Ascending aorta (tissue), 2 donors: ENCODE measurements at regions of chr14 and their contacts with region 1.

Region 1: GRCh38 chr14:61025251-61026223 is 44.5 kb downstream of the SLC38A6 start:
- DNase-seq: peak in 1 of 2 donors; percentile 71
- H3K4me3 ChIP-seq: peak overlapping the region in 1 of 2 donors; percentile 1
- H3K27ac ChIP-seq: no peak overlapping the region
- H3K4me1 ChIP-seq: no peaks in the 10 kb centered on the region
- H3K27me3 ChIP-seq: no peaks in the 10 kb centered on the region
- CTCF ChIP-seq: peak; percentile 72 to 87 (median 85)

Region 2: GRCh38 chr14:60622917-60623257 is 402.6 kb before region 1 on chr14:
- intact Hi-C with region 1: loop called (anchors 1 kb)
- DNase-seq: no peak
- H3K4me3 ChIP-seq: no peak overlapping the region
- H3K27ac ChIP-seq: no peak overlapping the region
- H3K4me1 ChIP-seq: no peaks in the 10 kb centered on the region
- H3K27me3 ChIP-seq: no peaks in the 10 kb centered on the region
- CTCF ChIP-seq: no peak

Region 3: GRCh38 chr14:60760653-60761364 is 264.7 kb before region 1 on chr14:
- intact Hi-C with region 1: no loop called
- DNase-seq: no peak
- H3K4me3 ChIP-seq: no peak overlapping the region
- H3K27ac ChIP-seq: no peak overlapping the region
- H3K4me1 ChIP-seq: peaks cover 3 to 4% of the 10 kb centered on the region in 2 donors
- H3K27me3 ChIP-seq: no peaks in the 10 kb centered on the region
- CTCF ChIP-seq: no peak

Region 4: GRCh38 chr14:60945984-60946383 is 79.6 kb before region 1 on chr14:
- intact Hi-C with region 1: no loop called
- DNase-seq: no peak
- H3K4me3 ChIP-seq: no peak overlapping the region
- H3K27ac ChIP-seq: no peak overlapping the region
- H3K4me1 ChIP-seq: peaks cover 0 to 5% of the 10 kb centered on the region in 2 donors
- H3K27me3 ChIP-seq: no peaks in the 10 kb centered on the region
- CTCF ChIP-seq: no peak

Region 5: DNA sequence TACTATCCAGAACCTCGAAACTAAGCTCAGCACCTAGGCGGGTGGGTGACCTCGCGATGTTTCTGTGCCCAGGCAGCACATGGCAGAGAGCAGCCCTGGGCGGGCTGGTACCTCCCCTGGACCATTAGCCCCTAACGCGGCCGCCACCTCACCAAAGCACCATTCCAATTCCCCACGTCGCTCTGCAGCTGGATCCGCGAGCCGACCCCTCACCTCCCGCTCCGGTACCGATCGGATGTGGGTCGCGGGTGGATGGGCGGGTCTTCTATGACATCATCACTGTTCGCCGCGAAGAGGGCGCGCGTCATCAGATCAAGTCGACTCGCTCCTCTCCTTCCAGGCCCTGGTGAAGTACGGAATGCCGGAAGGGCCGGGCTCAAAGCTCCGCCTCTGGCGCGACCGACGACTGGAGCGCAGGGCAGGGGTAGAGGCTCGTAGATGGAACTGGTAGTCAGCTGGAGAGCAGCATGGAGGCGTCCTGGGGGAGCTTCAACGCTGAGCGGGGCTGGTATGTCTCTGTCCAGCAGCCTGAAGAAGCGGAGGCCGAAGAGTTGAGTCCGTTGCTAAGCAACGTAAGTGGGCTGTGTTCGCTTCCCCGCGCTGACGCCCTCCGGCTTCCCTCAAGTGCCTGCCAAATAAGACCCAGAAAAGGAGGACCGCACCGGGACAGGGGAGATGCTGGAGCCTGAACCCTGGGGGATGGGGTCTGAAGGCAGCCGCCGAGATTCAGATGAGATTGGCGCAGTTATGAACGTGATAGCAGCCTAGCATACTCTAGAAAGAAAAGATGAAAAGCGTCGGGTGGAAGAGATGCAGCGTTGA is 44.5 kb before region 1 on chr14 and contains the starts of genes SLC38A6 and TRMT5:
- intact Hi-C with region 1: no loop called
- DNase-seq: peak; percentile 75 to 98
- H3K4me3 ChIP-seq: peak within 1 kb of the TSS; percentile 67 to 84
- H3K27ac ChIP-seq: peak within 1 kb of the TSS; percentile 85 to 87
- H3K4me1 ChIP-seq: peaks cover 0 to 11% of the 10 kb centered on the region in 2 donors
- H3K27me3 ChIP-seq: no peaks in the 10 kb centered on the region
- CTCF ChIP-seq: no peak
- total RNA-seq, gene SLC38A6: 1.8 TPM
- total RNA-seq, gene TRMT5: 3.5 TPM

Region 6: DNA sequence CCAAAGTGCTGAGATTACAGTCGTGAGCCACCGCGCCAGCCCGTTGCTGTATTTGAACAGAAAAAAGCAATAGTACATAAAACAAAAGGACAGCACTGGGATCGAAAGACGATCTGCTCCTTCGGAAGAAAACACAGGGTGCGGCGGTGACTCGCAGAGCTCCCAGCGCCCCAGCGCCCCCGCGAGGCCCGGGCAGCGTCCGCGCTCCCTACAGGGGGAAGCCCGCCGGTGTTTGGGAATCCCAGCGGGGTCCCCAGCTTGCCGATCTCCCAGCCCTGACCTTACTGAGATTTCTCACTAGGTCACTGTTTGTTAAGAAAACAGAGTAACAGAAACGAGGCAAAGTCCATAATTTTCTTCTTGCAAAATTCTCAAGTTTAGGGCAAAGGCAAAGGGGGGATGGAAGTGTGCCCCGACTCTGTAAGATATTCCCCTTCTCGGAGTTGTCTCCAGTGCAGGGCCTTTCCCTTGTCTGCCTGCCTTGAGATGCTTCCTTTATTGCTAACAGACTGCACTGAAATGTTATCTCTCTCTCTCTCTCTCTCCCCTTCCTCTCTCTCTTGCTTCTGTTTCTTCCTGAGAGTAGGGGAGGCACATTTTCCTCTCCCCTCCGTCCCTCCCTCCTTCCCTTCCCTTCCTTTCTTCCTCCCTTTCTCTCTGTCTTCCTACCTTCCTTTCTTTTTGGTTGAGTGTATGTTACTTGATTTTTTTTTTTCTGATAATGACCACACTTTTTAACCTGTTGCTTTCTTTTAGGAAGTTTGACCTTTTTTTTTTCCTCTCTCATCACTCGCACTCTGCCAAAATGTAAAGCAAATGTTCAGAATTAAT is 163.7 kb after region 1 on chr14:
- intact Hi-C with region 1: loop called (anchors 5 kb)
- DNase-seq: peak in 1 of 2 donors; percentile 79
- H3K4me3 ChIP-seq: peak overlapping the region; percentile 46 to 54
- H3K27ac ChIP-seq: peak overlapping the region; percentile 63 to 65
- H3K4me1 ChIP-seq: peaks cover 8 to 16% of the 10 kb centered on the region in 2 donors
- H3K27me3 ChIP-seq: no peaks in the 10 kb centered on the region
- CTCF ChIP-seq: peak; percentile 55 to 83 (median 59)

Region 7: GRCh38 chr14:61234215-61234916 is 208.8 kb after region 1 on chr14:
- intact Hi-C with region 1: no loop called
- DNase-seq: no peak
- H3K4me3 ChIP-seq: no peak overlapping the region
- H3K27ac ChIP-seq: no peak overlapping the region
- H3K4me1 ChIP-seq: no peaks in the 10 kb centered on the region
- H3K27me3 ChIP-seq: no peaks in the 10 kb centered on the region
- CTCF ChIP-seq: no peak

Region 8: DNA sequence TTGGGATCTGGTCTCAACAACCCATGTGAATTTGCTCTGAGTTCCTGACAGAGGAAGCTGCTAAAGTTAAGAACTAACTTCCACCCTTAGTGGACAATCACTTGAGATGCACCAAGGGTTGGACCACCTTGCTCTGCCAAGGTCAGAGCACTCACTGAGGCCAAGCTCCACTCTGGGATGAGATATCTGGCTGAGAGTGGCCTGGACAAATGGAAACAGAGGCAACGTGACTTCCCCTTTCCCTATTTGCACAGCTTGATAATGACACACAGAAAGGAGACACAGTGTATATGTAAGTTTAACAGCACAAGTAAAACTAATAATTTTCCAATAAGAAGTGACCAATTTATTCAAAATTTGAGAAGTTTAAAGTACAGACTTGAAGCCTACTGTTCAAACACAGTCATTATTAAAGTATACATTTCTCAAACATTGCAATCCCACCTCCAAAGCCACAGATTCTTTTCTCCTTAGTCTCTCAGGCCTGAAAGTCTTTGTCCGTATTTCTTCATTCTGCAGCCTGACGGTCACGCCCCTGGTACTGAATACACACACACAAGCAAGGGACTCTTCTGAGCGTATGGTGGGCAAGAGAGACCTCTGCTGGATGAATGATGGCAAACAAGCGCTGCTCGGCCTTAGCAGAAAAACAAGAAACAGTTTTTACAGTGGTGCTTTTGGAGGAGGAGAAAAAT is 227.0 kb after region 1 on chr14:
- intact Hi-C with region 1: loop called (anchors 10 kb)
- DNase-seq: peak; percentile 50 to 86
- H3K4me3 ChIP-seq: no peak overlapping the region
- H3K27ac ChIP-seq: no peak overlapping the region
- H3K4me1 ChIP-seq: no peaks in the 10 kb centered on the region
- H3K27me3 ChIP-seq: no peaks in the 10 kb centered on the region
- CTCF ChIP-seq: peak; percentile 72 to 82 (median 77)